ENCODE measurements at regions of chr19 and their contacts with region 1.

Region 1: DNA sequence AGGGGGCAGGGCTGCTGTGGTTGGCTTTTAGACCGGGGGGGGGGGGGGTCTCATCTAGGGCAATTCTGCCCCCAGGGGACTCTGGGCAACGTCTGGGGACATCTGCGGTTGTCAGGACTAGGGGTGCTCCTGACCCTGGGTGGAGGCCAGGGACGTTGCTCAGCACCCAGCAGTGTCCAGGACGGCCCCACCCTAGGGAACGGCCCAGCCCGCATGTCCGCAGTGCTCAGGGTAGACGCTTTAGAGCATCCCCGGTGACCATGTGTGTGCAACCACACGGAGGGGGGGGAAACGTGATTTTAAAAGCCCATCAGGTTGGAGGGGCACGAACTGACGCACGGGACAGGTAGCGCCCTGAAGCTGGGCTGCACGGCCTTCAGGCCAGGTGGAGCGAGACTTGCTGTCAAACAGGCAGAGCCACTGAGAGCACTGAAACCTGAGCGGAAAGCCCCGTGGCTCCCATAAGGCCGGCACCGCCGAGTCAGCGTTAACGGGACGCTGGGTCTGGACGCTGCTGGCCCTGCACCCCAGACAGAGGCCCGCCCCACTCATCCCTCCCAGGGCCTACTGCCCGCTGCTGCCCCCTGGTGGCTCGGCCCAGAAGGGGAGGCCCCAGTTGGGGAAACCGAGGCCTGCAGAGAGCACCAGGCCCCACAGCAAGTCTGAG is 8.3 kb downstream of the CACTIN start:
- DNase-seq: peak; percentile 61 to 87
- H3K4me3 ChIP-seq: no peak overlapping the region
- H3K27ac ChIP-seq: peak overlapping the region in 1 of 2 donors; percentile 21
- H3K4me1 ChIP-seq: peaks cover 0 to 10% (median 7%) of the 10 kb centered on the region in 4 donors
- H3K27me3 ChIP-seq: no peaks in the 10 kb centered on the region
- CTCF ChIP-seq: peak; percentile 98 to 99

Region 2: DNA sequence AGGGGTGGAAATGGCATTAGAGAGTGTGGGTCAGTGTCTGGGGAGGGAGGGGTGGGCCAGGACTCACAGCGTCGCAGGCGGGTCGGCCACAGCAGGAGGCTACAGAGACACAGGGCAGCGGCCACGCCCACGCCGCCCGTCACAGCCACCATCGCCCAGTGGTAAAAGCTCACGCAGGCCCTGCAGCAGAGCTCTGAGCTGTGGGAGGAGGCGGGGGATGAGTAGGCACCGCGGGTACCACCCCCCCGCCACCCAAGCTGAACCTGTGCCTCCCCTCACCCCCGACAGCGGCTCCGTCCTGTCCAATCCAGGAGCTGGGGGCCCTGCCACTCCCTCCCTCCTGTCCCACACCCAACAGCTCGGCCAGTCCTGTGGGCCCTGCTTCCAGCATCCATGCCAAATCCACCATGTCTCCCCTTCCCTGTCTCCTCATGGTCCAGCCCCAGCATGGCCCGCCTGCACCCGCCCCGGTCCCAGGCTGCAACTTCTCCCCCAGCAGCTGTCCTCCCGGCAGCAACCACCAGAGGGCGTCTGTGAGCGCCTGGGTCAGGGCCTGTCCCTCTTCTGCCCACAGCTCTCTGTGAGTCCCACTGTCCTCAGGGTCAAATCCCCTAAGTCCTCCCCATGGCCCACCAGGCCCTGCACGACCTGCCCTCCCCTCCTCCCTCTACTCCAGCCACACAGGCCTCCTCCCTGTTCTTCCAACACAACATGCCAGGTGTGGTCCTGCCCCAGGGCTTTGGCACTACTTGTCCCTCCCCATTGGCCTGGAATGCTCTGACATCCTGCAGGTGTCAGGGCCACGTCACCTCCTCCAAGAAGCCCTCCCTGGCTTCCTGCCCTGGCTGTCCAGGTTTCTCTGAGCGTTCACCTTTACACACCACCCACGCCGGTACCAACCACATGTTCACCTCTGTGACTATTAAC is 73.3 kb before region 1 on chr19:
- intact Hi-C with region 1: loop called (anchors 1 kb)
- DNase-seq: peak; percentile 37 to 85
- H3K4me3 ChIP-seq: no peak overlapping the region
- H3K27ac ChIP-seq: no peak overlapping the region
- H3K4me1 ChIP-seq: peaks cover 0 to 21% (median 10%) of the 10 kb centered on the region in 4 donors
- H3K27me3 ChIP-seq: no peaks in the 10 kb centered on the region
- CTCF ChIP-seq: peak; percentile 93 to 96

Region 3: DNA sequence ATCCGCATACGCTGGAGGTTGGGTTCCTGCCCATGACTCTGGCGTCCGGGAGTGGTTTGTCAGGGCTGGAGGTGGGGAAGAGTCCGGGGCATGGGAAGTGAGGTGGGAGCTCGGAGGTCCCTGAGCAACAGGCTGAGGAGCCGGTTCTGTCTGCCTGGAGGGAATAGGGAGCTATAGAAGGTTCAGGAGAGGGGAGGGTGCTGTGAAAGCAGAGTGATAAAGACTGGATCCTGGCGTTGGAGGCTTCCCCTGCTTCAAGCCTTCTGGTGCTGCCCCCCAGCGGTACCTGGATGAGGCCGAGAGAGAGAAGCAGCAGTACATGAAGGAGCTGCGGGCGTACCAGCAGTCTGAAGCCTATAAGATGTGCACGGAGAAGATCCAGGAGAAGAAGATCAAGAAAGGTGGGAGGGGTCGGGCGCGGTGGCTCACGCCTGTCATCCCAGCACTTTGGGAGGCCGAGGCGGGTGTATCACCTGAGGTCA is 43.0 kb before region 1 on chr19:
- intact Hi-C with region 1: loop called (anchors 5 kb)
- DNase-seq: no peak
- H3K4me3 ChIP-seq: no peak overlapping the region
- H3K27ac ChIP-seq: no peak overlapping the region
- H3K4me1 ChIP-seq: peaks cover 5 to 53% (median 32%) of the 10 kb centered on the region in 4 donors
- H3K27me3 ChIP-seq: no peaks in the 10 kb centered on the region
- CTCF ChIP-seq: no peak

Region 4: DNA sequence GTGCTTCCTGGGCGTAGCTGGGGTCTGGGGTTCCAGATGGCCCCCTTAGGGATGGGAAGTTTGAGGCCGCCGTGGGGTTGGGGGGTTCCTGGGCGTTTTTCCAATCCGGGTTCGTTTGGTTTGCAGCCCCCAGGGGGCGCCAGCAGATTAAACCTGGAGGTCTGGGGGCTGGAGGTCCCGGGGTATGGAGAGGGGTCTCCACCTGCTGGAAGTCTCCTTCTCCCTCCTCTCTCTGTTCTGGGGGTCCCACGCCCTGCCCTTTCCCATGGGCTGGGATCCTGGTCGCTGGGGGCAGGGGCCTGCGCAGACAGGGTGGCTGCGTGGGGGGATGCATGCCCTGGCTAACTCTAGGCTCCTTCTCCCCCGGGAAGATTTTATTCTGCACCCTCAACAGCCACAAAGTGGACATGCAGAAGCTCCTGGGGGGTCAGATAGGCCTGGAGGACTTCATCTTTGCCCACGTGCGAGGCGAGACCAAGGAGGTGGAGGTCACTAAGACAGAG is 32.1 kb before region 1 on chr19:
- intact Hi-C with region 1: loop called (anchors 2 kb)
- DNase-seq: no peak
- H3K4me3 ChIP-seq: peak overlapping the region; percentile 37 to 41
- H3K27ac ChIP-seq: peak overlapping the region in 1 of 2 donors; percentile 17
- H3K4me1 ChIP-seq: peaks cover 0 to 26% (median 20%) of the 10 kb centered on the region in 4 donors
- H3K27me3 ChIP-seq: peaks cover 0 to 4% of the 10 kb centered on the region in 2 donors
- CTCF ChIP-seq: peak; percentile 58 to 66

Measured in tibial artery (tissue), 4 donors.